ENCODE measurements at regions of chr13 and their contacts with region 1.

Region 1: DNA sequence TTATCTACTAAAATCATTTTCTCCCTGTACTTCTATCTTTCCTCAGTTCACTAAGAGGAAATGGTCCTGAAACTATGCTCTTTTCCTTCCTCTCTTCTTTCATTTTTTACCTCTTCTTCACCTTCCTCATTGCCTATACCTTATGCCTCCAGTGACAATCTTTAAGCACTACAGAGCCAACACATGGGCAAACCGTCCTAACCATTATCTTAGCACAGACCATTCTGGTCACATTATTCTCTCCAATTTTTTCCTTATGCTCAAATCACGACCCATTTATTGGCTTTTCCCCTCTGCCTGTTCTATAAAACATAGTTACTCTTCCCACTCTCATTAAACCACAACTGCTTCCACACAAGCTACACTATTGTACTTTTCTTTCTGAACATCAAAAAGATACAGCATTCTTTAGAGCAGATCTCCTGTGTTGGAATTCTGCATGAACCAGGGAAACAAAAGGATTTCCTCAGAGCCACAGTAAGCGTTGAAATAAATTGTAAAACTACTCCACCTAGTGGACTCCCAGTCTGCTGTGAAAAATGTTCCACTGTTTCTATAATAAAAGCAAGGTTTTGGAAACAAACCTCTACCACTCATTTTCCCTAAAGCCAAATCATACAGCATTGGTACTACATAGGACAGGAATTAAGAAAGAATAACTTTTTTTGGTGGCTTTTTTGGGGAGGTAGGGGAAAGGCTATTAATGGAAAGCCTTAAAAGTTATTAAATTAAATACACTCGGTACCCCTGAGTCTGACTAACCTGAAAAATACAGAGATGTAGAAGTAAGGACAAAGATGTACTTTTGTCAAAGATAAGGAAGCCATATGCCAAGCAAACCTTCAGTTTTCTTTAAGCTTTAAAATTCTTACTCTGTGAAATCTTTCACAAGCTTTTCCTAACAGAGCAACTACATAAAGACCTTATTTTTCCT is 19.5 kb downstream of the NUFIP1 start:
- H3K4me3 Mint-ChIP-seq: no peak overlapping the region
- H3K27ac Mint-ChIP-seq: no peak overlapping the region
- H3K4me1 Mint-ChIP-seq: no peaks in the 10 kb centered on the region
- H3K27me3 Mint-ChIP-seq: no peaks in the 10 kb centered on the region

Region 2: GRCh38 chr13:43905435-43906031 is 1064.3 kb before region 1 on chr13:
- intact Hi-C with region 1: loop called (anchors 5 kb)
- H3K4me3 Mint-ChIP-seq: no peak overlapping the region
- H3K27ac Mint-ChIP-seq: no peak overlapping the region
- H3K4me1 Mint-ChIP-seq: no peaks in the 10 kb centered on the region
- H3K27me3 Mint-ChIP-seq: peaks cover 63% of the 10 kb centered on the region

Region 3: DNA sequence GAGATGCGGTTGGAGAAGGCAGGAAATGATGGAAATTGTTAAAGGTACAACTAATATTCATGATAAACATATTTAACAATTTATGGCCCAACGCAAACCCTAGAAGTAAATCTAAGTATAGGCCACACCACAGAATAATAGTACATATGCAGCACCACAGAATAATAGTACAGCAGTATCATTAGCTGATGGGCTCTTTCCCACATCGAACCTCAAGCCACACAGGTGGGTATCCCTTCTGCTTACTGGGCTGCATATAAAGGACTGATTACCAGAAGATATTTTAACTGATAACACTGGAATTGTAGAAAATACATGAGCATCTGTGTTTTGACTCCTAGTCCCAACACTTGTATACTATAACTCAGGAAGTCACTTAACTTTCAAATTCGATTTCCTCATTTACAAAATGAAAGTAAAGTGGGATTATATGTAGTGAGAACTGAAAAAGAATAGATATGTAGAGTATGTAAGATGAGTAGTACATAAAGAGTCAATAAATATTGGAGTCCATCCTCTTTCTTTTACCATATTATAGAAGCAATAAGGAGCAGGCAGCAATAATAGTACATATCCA is 485.2 kb before region 1 on chr13:
- intact Hi-C with region 1: loop called (anchors 1 kb)
- H3K4me3 Mint-ChIP-seq: no peak overlapping the region
- H3K27ac Mint-ChIP-seq: no peak overlapping the region
- H3K4me1 Mint-ChIP-seq: peaks cover 10% of the 10 kb centered on the region
- H3K27me3 Mint-ChIP-seq: no peaks in the 10 kb centered on the region

Region 4: GRCh38 chr13:44577236-44578066 is 392.4 kb before region 1 on chr13:
- intact Hi-C with region 1: loop called (anchors 10 kb)
- H3K4me3 Mint-ChIP-seq: peak overlapping the region; percentile 83
- H3K27ac Mint-ChIP-seq: peak overlapping the region; percentile 98
- H3K4me1 Mint-ChIP-seq: peaks cover 43% of the 10 kb centered on the region
- H3K27me3 Mint-ChIP-seq: peaks cover 17% of the 10 kb centered on the region

Region 5: DNA sequence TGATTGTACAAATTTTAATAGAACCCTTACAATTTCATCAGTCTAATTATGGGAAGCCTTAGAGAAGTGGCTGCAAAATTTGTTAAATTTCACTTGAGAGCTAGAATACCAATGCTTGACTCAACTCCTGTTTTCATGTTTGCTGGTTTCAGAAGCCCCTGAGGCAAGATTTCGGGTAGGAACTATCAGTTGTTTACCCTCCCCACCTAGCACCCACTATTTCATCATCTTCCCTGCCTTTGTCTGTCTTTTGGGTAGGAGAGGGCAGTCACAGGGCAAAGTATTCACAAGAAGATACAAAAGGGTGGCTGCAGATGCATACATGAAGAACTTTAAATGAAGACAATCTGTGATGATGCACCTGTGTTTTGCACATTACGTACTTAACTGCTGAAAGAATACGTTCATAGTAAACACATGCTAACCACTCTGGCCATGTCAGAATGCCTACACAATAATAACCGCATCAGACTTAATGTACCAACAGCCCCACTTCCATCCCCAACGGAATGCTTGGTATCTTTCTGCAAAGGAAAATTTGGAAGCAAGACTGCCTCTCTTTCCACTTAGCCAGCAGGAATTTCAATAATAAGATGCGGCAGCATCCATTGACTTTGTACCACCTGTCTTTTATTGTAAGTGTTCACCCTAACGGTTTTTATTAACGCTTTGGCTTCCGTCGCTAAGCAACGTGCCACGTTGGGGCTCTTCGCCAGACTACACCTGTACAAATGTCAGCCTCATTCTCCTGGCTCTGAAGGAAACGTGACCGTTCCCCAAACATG is 340.7 kb after region 1 on chr13:
- intact Hi-C with region 1: loop called (anchors 2 kb)
- H3K4me3 Mint-ChIP-seq: no peak overlapping the region
- H3K27ac Mint-ChIP-seq: no peak overlapping the region
- H3K4me1 Mint-ChIP-seq: peaks cover 17% of the 10 kb centered on the region
- H3K27me3 Mint-ChIP-seq: peaks cover 30% of the 10 kb centered on the region

Measured in dendritic cell treated with granulocyte-macrophage colony-stimulating factor and Interleukin-4, amounts not matched to agents 40 ng/mL and 50 ng/mL, for 4 days (primary cell).